Activated CD4-positive, alpha-beta memory T cell treated with anti-CD3 and anti-CD28 coated beads for 36 hours (primary cell): ENCODE measurements at regions of chr1 and their contacts with region 1.

Region 1: DNA sequence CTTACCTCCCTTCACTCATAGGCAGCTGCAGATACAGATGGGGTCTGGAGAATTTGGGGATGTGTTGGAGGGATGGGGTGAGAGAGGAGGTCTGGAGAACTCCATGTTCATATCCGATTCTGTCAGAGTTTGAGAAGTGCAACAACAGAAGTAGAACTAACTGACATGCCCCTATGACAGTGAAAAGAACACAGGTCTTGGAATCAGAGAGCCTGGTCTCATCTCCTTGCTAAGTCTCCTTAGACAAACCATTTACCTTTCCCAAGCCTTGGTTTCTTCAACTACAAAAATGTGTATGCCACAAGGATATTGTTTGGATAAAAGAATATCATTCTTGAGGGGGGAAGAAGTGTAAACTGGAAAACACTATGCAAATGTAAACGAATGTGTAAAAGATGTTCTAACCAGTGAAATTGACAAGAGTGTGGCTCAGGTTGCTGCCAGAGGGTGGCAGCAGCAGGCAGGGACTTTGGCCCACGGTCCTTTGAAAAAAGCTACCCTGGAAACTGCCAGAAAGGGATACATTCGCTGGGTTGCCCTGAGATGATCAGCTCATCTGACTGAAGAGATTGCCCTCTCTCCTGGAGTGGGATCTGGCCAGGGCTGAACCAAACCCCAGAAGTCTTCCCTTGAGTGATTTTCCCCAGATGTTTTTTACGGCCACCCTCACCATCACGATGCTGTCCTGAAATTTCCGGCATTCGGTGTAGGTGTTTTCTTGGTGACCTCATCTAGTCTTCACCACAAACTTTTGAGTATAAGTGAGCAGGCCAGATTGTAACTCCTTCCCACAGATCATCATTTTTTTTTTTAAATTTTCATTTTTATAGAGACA is 17.0 kb upstream of the CD2 start:
- DNase-seq: peak; percentile 84
- H3K4me3 Mint-ChIP-seq: peak overlapping the region; percentile 74
- H3K27ac Mint-ChIP-seq: peak overlapping the region; percentile 100
- H3K4me1 Mint-ChIP-seq: peaks cover 68% of the 10 kb centered on the region
- H3K27me3 Mint-ChIP-seq: no peaks in the 10 kb centered on the region

Region 2: DNA sequence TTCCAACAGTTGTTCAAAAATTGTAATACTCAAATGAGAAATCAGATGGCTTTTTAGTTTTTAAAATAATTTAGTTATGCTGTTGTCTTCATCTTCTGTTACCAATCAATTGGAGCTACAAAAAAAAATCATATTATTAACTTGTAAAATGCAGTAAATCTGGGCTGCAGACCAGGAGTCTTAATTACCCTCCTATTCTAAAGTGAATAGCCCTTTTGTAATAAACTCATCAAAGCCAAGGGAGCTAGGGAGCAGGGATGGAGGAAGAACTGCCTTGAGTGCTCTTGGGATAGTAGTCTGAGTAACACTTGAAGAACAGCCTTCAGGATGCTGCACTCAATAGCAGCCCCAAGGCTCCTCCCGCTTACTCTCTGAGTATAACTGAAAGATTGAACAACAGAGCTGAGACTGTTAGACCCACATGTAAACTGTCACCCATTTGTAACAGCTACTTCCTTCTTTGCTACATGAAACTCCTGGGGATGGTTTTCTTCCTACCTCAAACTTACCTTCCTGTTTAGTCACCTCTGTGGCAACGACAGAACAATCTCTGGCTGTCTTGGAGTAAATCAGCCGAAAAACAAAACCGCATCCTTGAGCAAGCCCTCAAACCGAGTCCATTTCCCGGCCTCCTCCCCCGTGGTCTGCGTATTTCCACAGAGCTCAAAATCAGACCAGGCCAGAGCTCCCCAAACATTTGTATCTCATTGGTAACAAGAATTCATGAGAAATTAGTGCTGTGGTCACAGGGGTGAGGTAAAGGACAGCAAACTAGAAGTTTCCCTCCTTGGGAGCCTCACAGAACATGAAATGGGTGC is 222.3 kb before region 1 on chr1:
- CTCF ChIA-PET with region 1: no interaction called
- POLR2A ChIA-PET with region 1: interaction called, 3 read pairs
- intact Hi-C with region 1: loop called (anchors 2 kb)
- DNase-seq: peak; percentile 88
- H3K4me3 Mint-ChIP-seq: peak overlapping the region; percentile 55
- H3K27ac Mint-ChIP-seq: peak overlapping the region; percentile 96
- H3K4me1 Mint-ChIP-seq: peaks cover 63% of the 10 kb centered on the region
- H3K27me3 Mint-ChIP-seq: no peaks in the 10 kb centered on the region

Region 3: DNA sequence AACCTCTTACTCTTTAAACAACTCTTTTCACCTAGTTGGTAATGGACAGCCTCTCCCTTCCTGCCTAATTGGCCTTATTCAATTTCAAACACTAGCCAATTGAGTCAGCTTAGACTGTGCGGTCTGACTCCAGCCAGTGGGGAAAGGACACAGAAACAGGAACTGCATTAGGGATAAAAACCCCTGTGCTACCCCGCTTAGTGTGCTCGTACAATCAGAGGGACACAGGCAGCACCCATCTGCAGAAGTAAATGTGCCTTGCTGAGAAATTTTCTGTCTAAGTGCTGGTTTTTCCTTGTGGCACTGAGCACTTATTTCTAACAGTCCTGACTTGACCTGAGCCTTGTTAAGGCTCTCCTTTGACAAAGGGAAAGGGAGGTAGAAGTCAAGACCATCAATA is 11.0 kb after region 1 on chr1:
- CTCF ChIA-PET with region 1: interaction called, 60 read pairs
- POLR2A ChIA-PET with region 1: interaction called, 63 read pairs
- intact Hi-C with region 1: loop called (anchors 1 kb)
- DNase-seq: no peak
- H3K4me3 Mint-ChIP-seq: no peak overlapping the region
- H3K27ac Mint-ChIP-seq: no peak overlapping the region
- H3K4me1 Mint-ChIP-seq: peaks cover 30% of the 10 kb centered on the region
- H3K27me3 Mint-ChIP-seq: no peaks in the 10 kb centered on the region

Region 4: DNA sequence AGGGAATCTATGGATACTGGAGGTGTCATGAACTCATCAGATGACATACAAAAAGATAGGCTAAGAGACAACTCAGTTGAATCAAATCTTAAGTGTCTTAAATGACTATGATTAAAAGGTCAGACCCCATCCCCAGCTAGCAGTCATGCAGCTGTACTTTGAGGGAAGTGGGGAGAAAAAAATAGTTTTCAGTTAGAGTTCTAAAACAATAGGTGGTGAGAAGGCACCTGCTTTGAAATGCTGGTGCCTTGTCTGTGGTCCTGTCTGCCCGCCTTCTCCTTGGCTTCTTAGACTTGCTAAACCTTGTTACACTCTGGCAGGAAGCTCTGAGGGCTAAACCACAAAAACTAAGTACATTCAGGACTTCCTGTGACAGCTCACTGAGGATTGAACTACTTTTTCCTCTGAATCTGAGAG is 32.3 kb after region 1 on chr1:
- CTCF ChIA-PET with region 1: interaction called, 181 read pairs
- POLR2A ChIA-PET with region 1: interaction called, 803 read pairs
- intact Hi-C with region 1: loop called (anchors 1 kb)
- DNase-seq: peak; percentile 85
- H3K4me3 Mint-ChIP-seq: peak overlapping the region; percentile 99
- H3K27ac Mint-ChIP-seq: peak overlapping the region; percentile 99
- H3K4me1 Mint-ChIP-seq: peaks cover 95% of the 10 kb centered on the region
- H3K27me3 Mint-ChIP-seq: peaks cover 2% of the 10 kb centered on the region

Region 5: GRCh38 chr1:116826818-116827606 is 89.8 kb after region 1 on chr1:
- CTCF ChIA-PET with region 1: interaction called, 24 read pairs
- POLR2A ChIA-PET with region 1: interaction called, 25 read pairs
- intact Hi-C with region 1: loop called (anchors 1 kb)
- DNase-seq: peak; percentile 90
- H3K4me3 Mint-ChIP-seq: peak overlapping the region; percentile 79
- H3K27ac Mint-ChIP-seq: peak overlapping the region; percentile 91
- H3K4me1 Mint-ChIP-seq: peaks cover 77% of the 10 kb centered on the region
- H3K27me3 Mint-ChIP-seq: no peaks in the 10 kb centered on the region

Region 6: GRCh38 chr1:116847688-116848531 is 110.7 kb after region 1 on chr1:
- CTCF ChIA-PET with region 1: no interaction called
- POLR2A ChIA-PET with region 1: no interaction called
- intact Hi-C with region 1: no loop called
- DNase-seq: peak; percentile 61
- H3K4me3 Mint-ChIP-seq: no peak overlapping the region
- H3K27ac Mint-ChIP-seq: peak overlapping the region; percentile 34
- H3K4me1 Mint-ChIP-seq: peaks cover 27% of the 10 kb centered on the region
- H3K27me3 Mint-ChIP-seq: no peaks in the 10 kb centered on the region

Region 7: DNA sequence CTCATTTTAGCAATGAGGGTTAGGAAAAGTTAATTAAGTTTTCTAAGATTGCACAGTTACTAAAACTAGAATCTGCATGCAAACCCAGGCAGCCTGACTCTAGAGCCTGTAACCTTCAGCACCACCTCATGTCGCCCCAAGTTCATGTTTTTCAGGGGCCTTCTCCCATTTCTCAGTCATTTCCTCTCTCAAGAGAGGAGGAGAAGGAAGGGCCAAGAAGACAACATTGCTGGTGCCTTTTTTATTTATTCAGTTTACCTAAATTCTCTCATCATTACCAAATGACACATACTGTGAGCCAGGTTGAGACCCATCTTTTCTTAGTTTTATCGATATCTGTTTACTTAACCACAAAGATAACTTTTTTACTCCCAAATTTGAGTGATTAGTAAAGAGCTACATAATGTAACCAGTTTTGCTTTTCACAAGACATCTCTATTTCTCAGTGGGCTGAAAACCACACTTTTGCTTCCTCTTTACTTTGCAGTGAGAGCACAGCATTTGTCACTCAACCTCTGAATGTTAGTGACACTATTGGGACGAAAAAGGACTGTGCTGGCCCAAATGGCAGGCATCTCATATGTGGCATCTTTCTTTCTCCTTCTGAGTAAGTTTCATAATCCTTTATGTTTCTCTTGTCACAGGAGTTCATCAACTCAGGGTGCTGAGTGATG is 264.2 kb after region 1 on chr1 and contains the start of gene CD101:
- CTCF ChIA-PET with region 1: interaction called, 3 read pairs
- POLR2A ChIA-PET with region 1: no interaction called
- intact Hi-C with region 1: loop called (anchors 1 kb)
- DNase-seq: peak; percentile 66
- H3K4me3 Mint-ChIP-seq: no peak within 1 kb of the TSS
- H3K27ac Mint-ChIP-seq: peak within 1 kb of the TSS; percentile 26
- H3K4me1 Mint-ChIP-seq: peaks cover 31% of the 10 kb centered on the region
- H3K27me3 Mint-ChIP-seq: no peaks in the 10 kb centered on the region
- total RNA-seq, gene CD101: 0.14 to 0.19 TPM